Lower leg skin (tissue), 4 donors: ENCODE measurements at regions of chr4 and their contacts with region 1.

Region 1: GRCh38 chr4:80989921-80990544 is 40.5 kb upstream of the BMP3 start:
- DNase-seq: peak in 1 of 2 donors; percentile 20
- H3K4me3 ChIP-seq: no peak overlapping the region
- CTCF ChIP-seq: no peak
- POLR2A ChIP-seq: no peak

Region 2: DNA sequence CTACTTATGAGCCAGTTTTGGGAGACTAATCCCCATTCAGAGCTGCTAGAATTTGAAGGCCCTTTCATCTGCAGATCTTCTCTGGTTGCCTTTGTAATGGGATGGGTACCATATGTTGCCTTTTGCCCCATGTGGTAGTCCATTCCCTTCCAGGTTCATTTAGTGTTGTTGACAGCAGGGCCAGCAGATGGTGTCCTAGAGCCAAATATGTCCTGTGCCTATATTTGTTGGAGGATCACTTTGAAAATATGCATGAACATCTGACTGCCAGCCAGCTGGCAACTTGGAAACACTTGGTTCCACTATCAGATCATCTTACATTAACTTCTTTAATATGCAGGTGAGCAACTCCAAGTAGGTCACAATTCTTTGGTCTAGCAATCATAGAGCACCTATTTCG is 624.1 kb before region 1 on chr4:
- intact Hi-C with region 1: loop called (anchors 10 kb)
- DNase-seq: peak in 1 of 2 donors; percentile 36
- H3K4me3 ChIP-seq: no peak overlapping the region
- CTCF ChIP-seq: no peak
- POLR2A ChIP-seq: no peak

Region 3: GRCh38 chr4:80631861-80632260 is 358.2 kb before region 1 on chr4:
- intact Hi-C with region 1: no loop called
- DNase-seq: no peak
- H3K4me3 ChIP-seq: no peak overlapping the region
- CTCF ChIP-seq: no peak
- POLR2A ChIP-seq: no peak

Region 4: GRCh38 chr4:81060587-81061343 is 70.7 kb after region 1 on chr4:
- intact Hi-C with region 1: no loop called
- DNase-seq: no peak
- H3K4me3 ChIP-seq: no peak overlapping the region
- CTCF ChIP-seq: no peak
- POLR2A ChIP-seq: no peak